Posterior vena cava (tissue), 2 donors: ENCODE measurements at regions of chr11 and their contacts with region 1.

Region 1: GRCh38 chr11:112795142-112795815 is 165.9 kb upstream of the NCAM1 start:
- DNase-seq: no peak

Region 2: GRCh38 chr11:112769170-112769569 is 26.1 kb before region 1 on chr11:
- intact Hi-C with region 1: no loop called
- DNase-seq: no peak

Region 3: GRCh38 chr11:112961146-112961668 is 165.9 kb after region 1 on chr11 and contains the start of gene NCAM1:
- intact Hi-C with region 1: loop called in 1 of 2 experiments (anchors 5 kb)
- DNase-seq: peak; percentile 88
- total RNA-seq, gene NCAM1: 76.8 to 134 TPM

Region 4: GRCh38 chr11:113113801-113114706 is 318.8 kb after region 1 on chr11:
- intact Hi-C with region 1: loop called in 1 of 2 experiments (anchors 10 kb)
- DNase-seq: peak; percentile 80